GM10248 (cell line): ENCODE measurements at regions of chr14 and their contacts with region 1.

Region 1: DNA sequence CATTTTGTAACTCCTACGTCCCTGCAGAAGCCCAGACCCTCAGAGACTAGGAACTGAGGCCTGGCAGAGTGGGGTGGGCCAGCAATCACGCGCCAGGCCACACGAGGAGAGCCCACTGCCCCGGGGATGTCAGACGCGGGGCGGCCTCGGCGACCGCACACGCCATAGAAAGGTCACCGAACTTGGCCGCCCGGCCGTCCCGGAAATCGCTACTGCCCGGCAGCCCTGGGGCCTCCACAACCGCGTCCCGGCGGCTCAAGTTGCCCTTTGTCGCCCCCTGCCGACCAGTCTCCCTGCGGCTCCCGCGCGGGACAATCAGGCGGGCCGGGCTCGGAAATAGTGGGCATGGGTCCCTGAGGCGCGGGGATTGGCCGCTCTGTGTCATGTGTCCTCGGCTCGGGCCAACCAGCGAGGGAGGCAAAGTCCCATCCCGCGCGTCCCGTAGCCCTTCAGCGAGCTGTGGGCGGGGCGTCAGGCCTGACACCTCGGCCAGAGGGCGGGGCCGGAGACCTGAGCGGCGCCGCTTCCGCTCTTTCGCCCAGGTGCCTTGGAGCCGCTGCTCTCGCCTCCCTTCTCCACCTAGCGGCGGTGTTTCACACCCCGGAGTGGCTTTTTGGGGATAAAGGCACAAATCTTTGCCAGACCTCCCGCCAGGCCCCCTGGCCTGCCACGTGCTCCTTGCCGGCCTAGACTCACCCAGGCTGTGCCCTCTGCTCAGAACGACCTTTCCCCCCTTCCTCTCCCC is 33.4 kb upstream of the DEGS2 start:
- DNase-seq: peak; percentile 100
- CTCF ChIP-seq: peak; percentile 97

Region 2: DNA sequence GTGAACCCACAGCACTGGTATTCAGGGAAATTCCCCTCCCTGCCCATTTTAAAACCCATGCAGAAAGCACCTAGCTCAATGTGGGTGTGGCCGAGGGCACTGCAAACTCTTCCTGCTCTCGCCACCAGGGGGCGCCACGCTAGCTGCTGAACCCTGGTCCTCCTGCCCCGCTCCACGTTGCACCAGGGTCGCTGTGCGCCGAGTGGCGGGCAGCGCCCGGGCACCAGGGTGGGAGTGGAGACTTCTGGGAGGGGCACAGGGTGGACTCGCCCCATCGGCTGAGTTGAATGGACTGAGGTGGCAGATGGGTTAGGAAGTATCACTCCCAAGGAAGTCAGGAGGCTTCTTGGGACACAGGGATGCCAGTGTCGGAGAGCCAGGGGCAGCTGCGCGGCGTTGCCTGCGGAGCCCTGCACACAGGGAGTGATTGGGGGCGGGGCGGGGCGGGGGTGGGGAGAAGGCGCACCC is 872.7 kb before region 1 on chr14:
- CTCF ChIA-PET with region 1: no interaction called
- POLR2A ChIA-PET with region 1: no interaction called
- DNase-seq: peak; percentile 78
- CTCF ChIP-seq: peak; percentile 74

Region 3: DNA sequence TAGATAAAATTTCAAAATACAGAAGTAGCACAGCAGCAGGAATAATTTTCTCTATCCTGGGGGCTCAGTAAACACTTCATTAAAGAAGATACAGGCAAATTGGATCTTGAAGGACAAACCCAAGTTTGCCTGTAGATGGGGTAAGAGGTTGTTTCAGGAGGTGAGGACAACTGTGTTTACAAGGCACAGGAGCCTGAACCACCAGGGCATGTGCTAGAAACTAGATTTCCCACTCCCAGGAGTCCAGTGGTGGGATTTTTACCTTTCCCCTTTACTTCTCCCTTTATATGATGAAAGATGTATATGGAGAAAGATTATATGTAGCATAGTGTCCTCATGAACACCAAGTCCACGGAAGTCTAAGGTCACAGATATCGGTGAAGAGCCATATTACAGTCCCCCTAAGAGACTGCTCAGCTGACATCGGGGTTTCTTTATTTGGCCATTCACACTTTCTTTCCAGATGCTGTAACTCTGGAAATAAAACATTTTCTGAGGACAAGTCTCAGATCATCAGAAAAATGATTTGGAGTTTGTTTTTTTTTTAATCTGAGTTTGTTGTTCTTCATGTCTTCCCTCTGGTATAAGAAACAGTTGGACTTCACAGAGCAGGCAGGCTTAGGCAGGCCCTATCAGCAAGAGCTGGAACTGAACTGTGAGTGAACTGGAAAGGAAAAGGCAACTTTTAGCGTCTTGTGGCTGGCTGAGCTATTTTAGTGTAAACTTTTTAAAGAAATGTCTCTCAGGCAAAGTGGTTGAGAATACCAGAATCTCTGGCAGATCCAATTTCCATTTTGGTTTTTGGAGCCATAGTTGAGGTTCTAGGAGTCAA is 135.7 kb before region 1 on chr14:
- CTCF ChIA-PET with region 1: interaction called, 11 read pairs
- POLR2A ChIA-PET with region 1: no interaction called
- DNase-seq: peak; percentile 69
- CTCF ChIP-seq: peak; percentile 49

Region 4: DNA sequence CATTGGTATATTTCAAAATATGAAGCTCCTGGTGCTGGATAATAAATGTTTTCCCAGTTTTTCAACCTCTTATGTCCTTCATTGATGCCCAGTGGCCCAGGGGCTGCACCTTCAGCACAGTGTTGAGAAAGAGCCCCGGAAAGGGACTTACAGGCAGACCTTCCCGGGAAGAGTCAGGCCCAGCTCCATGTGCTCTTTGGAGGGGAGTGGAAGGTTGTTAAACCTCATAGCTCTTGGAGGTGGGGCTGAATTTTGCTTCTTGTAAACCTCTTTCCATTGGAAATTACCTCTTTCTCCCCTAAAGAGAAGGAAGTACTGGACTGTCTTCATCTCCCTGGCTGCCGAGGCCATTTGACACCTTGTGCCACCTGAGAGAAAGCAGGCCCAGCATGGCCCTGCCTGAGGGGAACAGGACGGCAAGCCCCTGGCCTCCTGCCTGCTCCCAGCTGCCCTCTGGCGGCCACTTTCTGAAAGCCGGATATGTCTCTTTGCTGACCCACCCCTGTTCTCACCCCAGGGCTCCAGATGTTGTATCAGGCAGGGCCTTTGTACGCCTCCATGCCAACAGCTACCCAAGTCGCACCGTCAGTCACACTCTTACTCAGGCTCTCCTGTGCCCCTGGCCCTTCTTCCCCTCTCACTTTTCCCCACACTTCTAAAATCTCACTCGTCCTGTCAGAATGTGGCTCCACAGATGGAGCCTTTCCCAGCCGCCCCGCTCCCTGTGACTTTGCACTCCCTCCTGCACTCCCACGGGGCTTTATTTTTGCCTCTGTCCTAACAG is 84.6 kb before region 1 on chr14:
- CTCF ChIA-PET with region 1: interaction called, 13 read pairs
- POLR2A ChIA-PET with region 1: no interaction called
- DNase-seq: peak; percentile 85
- CTCF ChIP-seq: peak; percentile 76

Region 5: GRCh38 chr14:100155042-100155846 is 37.6 kb before region 1 on chr14:
- CTCF ChIA-PET with region 1: interaction called, 26 read pairs
- POLR2A ChIA-PET with region 1: no interaction called
- DNase-seq: no peak
- CTCF ChIP-seq: peak; percentile 55

Region 6: DNA sequence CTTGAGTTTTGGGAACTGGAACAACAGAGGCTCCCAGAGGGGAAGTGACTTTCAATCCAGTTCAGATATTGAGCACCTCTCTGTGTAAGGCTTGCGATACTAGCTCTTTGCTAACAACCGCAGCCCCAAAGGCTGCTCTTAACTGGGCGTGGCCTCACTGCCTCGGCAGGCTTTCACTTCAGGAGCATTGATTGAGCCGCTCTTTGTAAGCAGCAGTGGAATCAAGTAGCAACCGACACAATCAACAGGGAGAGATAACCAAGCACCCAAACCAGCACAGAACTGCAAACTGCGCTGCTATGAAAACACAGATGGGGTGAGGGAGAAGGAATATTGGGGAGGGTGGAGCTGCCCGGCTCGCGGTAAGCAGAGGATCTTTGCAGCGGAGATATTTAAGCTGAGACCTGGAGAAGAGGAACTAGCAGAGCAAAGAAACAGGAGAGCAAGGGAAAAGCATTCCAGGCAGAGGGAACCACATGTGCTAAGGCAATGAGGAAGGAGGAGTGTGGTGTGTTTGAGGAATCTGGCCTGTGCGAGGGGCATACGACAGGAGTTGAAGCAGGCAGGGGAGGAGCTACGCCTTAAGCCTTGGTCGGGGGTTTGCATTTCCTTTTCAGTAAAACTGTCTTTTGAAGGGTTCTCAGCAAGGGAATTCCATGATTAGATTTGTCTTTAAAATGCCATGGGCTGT is 28.8 kb after region 1 on chr14:
- CTCF ChIA-PET with region 1: interaction called, 48 read pairs
- POLR2A ChIA-PET with region 1: interaction called, 3 read pairs
- DNase-seq: peak; percentile 67
- CTCF ChIP-seq: no peak

Region 7: DNA sequence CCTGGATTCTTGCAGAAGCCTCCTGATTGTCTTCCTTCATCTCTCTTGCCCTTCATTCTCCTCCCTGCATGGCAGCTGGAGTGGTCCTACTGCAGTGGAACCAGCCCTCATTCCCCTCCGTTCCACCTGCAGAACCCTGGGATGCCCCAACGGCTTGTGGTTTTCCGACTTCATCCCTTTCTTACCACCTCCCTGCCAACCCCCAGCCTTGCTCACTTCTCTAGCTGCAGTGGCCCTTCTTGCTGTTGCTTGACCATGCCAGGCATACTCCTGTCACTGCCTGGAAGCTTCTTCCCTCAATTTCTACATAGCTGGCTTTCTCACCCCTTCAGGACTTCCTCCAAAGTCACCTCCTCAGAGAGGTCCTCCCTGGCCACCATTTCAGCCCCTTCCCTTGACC is 271.1 kb after region 1 on chr14:
- CTCF ChIA-PET with region 1: no interaction called
- POLR2A ChIA-PET with region 1: no interaction called
- DNase-seq: no peak
- CTCF ChIP-seq: no peak

Region 8: GRCh38 chr14:100476012-100476822 is 283.4 kb after region 1 on chr14:
- CTCF ChIA-PET with region 1: no interaction called
- POLR2A ChIA-PET with region 1: no interaction called
- DNase-seq: no peak
- CTCF ChIP-seq: no peak

Region 9: DNA sequence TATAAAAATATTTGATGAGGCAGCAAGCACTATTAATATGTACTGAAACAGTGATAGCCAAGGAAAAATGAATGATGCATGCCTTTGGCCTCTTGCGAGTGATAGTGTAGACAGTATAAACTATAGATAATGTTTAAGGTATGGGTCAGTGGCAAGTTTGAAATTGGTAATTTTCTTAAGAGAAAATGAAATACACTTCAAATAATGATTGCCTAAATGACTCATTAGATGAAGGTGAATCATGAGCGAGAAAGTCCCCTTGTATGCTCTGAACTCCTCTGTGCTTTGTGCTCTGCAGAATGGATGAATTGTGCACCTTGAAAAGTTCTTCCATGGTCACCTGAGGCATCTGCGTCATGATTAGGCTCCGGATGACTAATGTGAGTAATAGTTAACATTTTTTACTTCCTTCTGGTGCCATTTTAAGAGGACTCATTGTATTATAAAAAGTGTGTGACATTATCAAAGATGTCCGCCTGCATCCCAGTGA is 795.6 kb after region 1 on chr14:
- CTCF ChIA-PET with region 1: no interaction called
- POLR2A ChIA-PET with region 1: no interaction called
- DNase-seq: no peak
- CTCF ChIP-seq: no peak